Lower leg skin (tissue), 4 donors: ENCODE measurements at regions of chr10 and their contacts with region 1.

Region 1: DNA sequence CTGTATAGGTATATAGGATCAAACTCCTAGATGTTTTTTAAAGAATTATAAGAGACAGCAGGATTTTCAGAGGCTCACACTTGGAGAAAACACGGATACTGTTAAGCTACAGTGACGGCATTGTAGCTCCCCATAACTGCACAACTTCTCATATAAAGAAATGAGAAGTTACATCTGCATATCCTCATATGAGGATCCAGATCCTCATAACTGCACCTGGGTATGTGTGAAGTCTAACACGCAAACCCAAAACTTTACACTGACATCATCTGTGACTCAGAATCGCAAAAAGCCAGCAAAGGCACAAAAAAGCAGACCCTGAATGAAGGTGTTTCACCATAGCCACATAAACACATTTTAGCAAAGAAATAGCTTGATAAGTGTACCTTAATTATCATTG is 34.1 kb downstream of the NEBL start:
- DNase-seq: no peak
- H3K4me3 ChIP-seq: no peak overlapping the region
- CTCF ChIP-seq: no peak
- POLR2A ChIP-seq: no peak

Region 2: GRCh38 chr10:20898866-20899535 is 36.0 kb after region 1 on chr10:
- intact Hi-C with region 1: no loop called
- DNase-seq: no peak
- H3K4me3 ChIP-seq: no peak overlapping the region
- CTCF ChIP-seq: no peak
- POLR2A ChIP-seq: no peak

Region 3: GRCh38 chr10:21273400-21273932 is 410.5 kb after region 1 on chr10:
- intact Hi-C with region 1: loop called (anchors 5 kb)
- DNase-seq: no peak
- H3K4me3 ChIP-seq: no peak overlapping the region
- CTCF ChIP-seq: no peak
- POLR2A ChIP-seq: no peak

Region 4: DNA sequence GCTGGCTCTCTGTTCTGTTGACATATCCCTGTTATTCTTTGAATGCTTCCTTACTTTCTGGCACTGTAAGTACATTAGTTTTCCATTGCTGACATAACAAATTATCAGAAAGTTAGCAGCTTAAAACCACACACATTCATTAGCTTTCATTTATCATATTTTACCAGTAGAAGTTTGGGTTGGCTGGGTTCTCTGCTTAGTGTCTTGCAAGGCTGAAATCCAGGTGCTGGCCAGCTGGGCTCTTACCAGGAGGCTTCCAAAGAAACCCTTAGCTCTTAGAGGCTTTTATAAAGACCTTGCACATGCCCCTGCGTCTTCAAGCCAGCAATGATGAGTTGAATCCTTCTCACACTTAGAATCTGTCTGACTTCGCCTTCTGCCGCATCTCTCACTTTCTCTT is 831.6 kb after region 1 on chr10:
- intact Hi-C with region 1: loop called (anchors 10 kb)
- DNase-seq: no peak
- H3K4me3 ChIP-seq: no peak overlapping the region
- CTCF ChIP-seq: no peak
- POLR2A ChIP-seq: no peak